AG04450 (cell line): ENCODE measurements at regions of chr17 and their contacts with region 1.

Region 1: DNA sequence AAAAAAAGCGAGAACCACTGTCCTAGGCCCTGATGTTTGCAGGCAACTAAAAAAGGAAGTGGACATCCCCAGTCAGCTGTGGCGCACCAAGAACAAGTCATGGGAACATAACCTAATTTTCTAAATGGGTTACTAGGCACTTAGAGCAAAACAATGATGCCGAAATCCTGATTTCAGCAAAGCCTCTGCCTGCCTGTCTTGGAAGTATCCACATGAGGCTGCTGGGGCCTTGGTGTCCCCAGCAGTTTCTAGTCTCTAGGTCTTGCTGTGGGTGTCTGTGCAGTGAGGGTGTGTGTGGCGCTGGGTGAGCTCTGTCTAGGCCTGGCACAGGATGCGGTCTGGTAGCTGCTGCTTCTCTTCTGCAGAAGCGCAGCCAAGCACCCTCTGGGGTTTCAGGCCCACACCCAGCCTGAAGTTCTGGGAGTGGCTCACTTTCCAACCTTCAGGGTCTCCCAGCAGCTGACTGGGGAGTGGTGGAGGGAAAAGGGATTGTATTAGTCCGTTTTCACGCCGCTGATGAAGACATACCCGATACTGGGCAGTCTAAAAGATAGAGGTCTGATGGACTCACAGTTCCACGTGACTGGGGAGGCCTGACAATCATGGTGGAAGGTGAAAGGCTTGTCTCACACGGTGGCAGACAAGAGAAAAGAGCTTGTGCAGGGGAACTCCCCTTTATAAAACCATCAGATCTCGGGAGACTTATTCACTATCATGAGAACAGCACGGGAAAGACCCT is 21.1 kb downstream of the STH start:
- DNase-seq: no peak
- H3K4me3 ChIP-seq: no peak overlapping the region
- H3K27ac ChIP-seq: no peak overlapping the region
- H3K27me3 ChIP-seq: no peaks in the 10 kb centered on the region
- CTCF ChIP-seq: no peak

Region 2: GRCh38 chr17:46266656-46267544 is 246.7 kb after region 1 on chr17:
- CTCF ChIA-PET with region 1: no interaction called
- POLR2A ChIA-PET with region 1: interaction called, 10 read pairs
- DNase-seq: peak; percentile 55
- H3K4me3 ChIP-seq: peak overlapping the region; percentile 73
- H3K27ac ChIP-seq: peak overlapping the region; percentile 90
- H3K27me3 ChIP-seq: no peaks in the 10 kb centered on the region
- CTCF ChIP-seq: no peak